ENCODE measurements at regions of chr4 and their contacts with region 1.

Region 1: GRCh38 chr4:31114816-31115215 is 394.6 kb downstream of the PCDH7 start:
- DNase-seq: no peak
- ATAC-seq: no peak
- H3K4me3 ChIP-seq: no peak overlapping the region
- H3K27ac ChIP-seq: no peak overlapping the region
- H3K4me1 ChIP-seq: no peaks in the 10 kb centered on the region
- H3K27me3 ChIP-seq: no peaks in the 10 kb centered on the region
- CTCF ChIP-seq: no peak
- EP300 ChIP-seq: no peak
- POLR2A ChIP-seq: no peak
- RAD21 ChIP-seq: no peak

Region 2: GRCh38 chr4:31146366-31146765 is 31.6 kb after region 1 on chr4:
- CTCF ChIA-PET with region 1: no interaction called
- POLR2A ChIA-PET with region 1: no interaction called
- in situ Hi-C with region 1: no loop called
- intact Hi-C with region 1: loop called (anchors 1 kb)
- DNase-seq: no peak
- ATAC-seq: no peak
- H3K4me3 ChIP-seq: no peak overlapping the region
- H3K27ac ChIP-seq: no peak overlapping the region
- H3K4me1 ChIP-seq: no peaks in the 10 kb centered on the region
- H3K27me3 ChIP-seq: no peaks in the 10 kb centered on the region
- CTCF ChIP-seq: no peak
- EP300 ChIP-seq: no peak
- POLR2A ChIP-seq: no peak
- RAD21 ChIP-seq: no peak